ENCODE measurements at regions of chr18 and their contacts with region 1.

Region 1: GRCh38 chr18:36017232-36017631 is 44.8 kb downstream of the RMP24 start:
- DNase-seq: no peak

Region 2: GRCh38 chr18:35953688-35954087 is 63.5 kb before region 1 on chr18:
- CTCF ChIA-PET with region 1: no interaction called
- POLR2A ChIA-PET with region 1: no interaction called
- DNase-seq: no peak

Region 3: GRCh38 chr18:36073686-36074085 is 56.5 kb after region 1 on chr18:
- CTCF ChIA-PET with region 1: no interaction called
- POLR2A ChIA-PET with region 1: no interaction called
- DNase-seq: no peak

Region 4: GRCh38 chr18:36095936-36096519 is 78.8 kb after region 1 on chr18:
- CTCF ChIA-PET with region 1: interaction called, 13 read pairs
- POLR2A ChIA-PET with region 1: no interaction called
- DNase-seq: peak; percentile 49

Measured in HEK293T (cell line).